Breast epithelium (tissue), 4 donors: ENCODE measurements at regions of chr5 and their contacts with region 1.

Region 1: DNA sequence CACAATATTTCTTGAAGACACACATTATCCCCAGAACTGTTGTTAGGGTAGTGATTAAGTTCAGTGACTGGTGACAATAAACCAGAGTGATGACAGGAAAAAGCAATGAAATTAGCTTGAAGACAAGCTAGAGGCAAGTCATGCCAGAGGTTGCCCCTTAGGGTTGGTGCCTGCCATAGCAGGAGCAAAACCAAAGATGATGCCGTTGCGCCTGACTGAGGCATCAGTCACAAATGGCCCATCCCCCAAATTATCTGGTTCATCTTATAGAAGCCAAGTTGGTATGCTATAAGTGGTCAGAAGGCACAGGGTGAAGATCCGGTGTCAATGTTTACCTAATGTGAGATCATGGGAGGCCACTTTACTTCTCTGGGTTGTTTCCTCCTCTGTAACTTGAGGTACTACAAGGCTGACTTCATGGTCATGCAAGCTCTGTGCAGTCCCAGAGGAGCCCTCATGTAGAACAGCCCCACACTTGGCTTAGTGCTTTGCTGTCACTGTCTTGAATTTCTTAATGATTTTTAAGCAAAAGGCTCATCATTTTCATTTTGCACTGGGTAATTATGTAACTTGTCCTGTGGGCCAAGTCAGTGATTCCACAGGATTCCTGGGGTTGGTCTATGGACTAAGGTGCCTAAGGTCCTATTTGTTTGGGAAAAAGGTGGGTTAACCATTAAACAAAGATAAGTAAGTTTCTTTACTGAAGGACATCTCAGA is 211.3 kb downstream of the MAN2A1 start:
- DNase-seq: no peak
- H3K4me3 ChIP-seq: no peak overlapping the region
- H3K27ac ChIP-seq: no peak overlapping the region
- H3K4me1 ChIP-seq: no peaks in the 10 kb centered on the region
- H3K27me3 ChIP-seq: no peaks in the 10 kb centered on the region
- CTCF ChIP-seq: no peak
- POLR2A ChIP-seq: no peak

Region 2: DNA sequence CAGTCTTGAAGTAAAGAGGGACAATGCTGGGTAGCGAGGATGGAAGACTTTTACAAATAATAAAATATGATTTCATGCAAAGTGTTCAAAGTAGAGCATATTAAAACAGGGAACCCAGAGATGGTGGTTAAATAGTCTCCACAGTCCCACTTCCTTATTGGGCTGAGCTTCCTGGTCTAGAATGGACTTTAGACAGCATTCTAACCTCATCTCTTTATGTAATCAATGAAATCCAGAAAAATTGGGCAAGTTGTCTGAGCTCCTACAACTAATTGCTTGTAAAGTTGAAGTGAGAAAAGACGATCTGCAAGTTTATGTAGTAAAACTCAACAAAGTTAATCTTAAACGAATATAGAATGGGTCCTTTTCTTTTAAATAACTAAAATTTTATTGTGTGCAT is 820.2 kb before region 1 on chr5:
- intact Hi-C with region 1: loop called (anchors 5 kb)
- DNase-seq: no peak
- H3K4me3 ChIP-seq: no peak overlapping the region
- H3K27ac ChIP-seq: no peak overlapping the region
- H3K4me1 ChIP-seq: no peaks in the 10 kb centered on the region
- H3K27me3 ChIP-seq: no peaks in the 10 kb centered on the region
- CTCF ChIP-seq: no peak
- POLR2A ChIP-seq: no peak

Region 3: DNA sequence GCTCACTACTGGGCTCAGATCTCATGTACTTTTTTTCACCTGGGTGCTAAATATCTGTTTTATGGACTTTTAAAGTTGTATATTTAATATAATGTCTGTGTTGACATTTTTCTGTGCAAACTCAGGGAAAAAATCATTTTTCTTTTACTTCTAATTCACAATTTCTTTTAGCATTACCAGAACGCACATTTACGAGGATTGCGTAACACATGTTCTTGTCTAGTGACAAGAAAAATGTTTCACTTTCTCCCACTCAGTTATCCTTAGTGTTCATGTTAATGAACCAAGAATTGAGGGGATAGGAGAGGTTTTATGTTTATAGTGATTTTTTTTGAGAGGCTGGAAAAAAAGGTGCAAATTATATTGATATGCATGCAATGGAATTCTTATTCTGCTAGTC is 405.0 kb before region 1 on chr5:
- intact Hi-C with region 1: no loop called
- DNase-seq: no peak
- H3K4me3 ChIP-seq: no peak overlapping the region
- H3K27ac ChIP-seq: no peak overlapping the region
- H3K4me1 ChIP-seq: no peaks in the 10 kb centered on the region
- H3K27me3 ChIP-seq: no peaks in the 10 kb centered on the region
- CTCF ChIP-seq: no peak
- POLR2A ChIP-seq: no peak

Region 4: GRCh38 chr5:109936996-109937395 is 35.9 kb after region 1 on chr5:
- intact Hi-C with region 1: no loop called
- DNase-seq: no peak
- H3K4me3 ChIP-seq: no peak overlapping the region
- H3K27ac ChIP-seq: no peak overlapping the region
- H3K4me1 ChIP-seq: no peaks in the 10 kb centered on the region
- H3K27me3 ChIP-seq: no peaks in the 10 kb centered on the region
- CTCF ChIP-seq: no peak
- POLR2A ChIP-seq: no peak

Region 5: DNA sequence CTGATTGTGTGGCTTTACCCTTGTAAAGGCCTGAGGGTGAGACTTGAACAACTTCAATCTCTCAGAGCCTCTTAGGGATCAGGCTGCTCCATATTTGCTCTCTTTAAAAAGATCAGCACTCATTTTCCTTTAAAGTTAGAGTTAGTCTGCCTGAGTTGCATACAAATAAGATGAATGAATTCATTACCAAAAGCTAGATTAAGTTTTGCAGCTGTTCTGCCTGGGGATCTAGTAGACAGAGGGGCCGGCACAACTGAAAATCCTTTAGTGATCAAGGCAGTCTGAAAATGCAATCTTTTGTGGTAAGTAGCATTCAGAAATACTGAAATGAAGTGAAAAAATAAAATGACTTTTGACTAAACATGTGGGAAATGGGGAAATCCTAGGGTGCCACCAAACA is 52.7 kb after region 1 on chr5:
- intact Hi-C with region 1: no loop called
- DNase-seq: no peak
- H3K4me3 ChIP-seq: no peak overlapping the region
- H3K27ac ChIP-seq: no peak overlapping the region
- H3K4me1 ChIP-seq: no peaks in the 10 kb centered on the region
- H3K27me3 ChIP-seq: no peaks in the 10 kb centered on the region
- CTCF ChIP-seq: no peak
- POLR2A ChIP-seq: no peak

Region 6: DNA sequence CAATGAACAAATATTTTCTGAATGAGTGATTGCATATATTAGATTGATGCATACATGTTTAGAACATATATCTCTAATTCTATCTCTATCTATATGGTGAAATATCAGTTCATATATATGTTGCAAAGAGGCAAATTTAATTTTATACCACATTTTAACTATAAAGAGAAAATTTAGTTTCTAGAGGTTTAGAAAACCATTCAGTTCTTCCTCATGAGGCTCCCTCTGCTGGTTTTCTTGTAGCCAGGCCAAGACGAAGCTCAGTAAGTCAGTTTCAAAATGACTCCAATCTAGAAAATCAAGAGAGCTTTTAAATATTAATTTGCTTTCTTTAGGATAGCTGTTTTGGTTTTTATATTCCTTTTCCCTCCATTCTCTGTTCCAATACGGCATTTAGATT is 513.3 kb after region 1 on chr5:
- intact Hi-C with region 1: no loop called
- DNase-seq: no peak
- H3K4me3 ChIP-seq: no peak overlapping the region
- H3K27ac ChIP-seq: no peak overlapping the region
- H3K4me1 ChIP-seq: no peaks in the 10 kb centered on the region
- H3K27me3 ChIP-seq: no peaks in the 10 kb centered on the region
- CTCF ChIP-seq: no peak
- POLR2A ChIP-seq: no peak